Heart left ventricle (tissue), 16 donors: ENCODE measurements at regions of chr17 and their contacts with region 1.

Region 1: DNA sequence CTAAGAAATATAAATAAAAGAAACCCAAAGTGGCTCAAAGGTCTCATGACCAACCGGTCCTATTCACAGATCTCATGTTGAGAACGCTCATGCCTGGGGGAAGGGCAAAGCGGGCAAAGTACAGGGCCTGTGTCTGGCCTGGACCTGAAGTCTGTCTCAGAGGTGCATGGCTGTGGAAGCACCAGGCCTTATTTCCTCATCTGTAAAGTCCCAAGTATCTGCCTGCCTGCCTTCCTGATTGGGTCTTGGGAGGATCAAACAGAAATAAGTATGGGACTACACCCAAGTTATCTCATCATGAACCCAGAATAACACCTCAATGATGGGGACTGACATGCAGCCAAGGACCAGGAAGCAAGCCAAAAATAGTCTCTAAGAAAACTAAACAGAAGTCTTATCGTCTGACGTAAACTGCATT is 14.2 kb downstream of the AXIN2 start:
- DNase-seq: peak in 2 of 5 donors; percentile 51 to 72
- ATAC-seq: peak; percentile 77 to 88 (median 84)
- H3K4me3 ChIP-seq: no peak overlapping the region
- H3K27ac ChIP-seq: peak overlapping the region in 11 of 12 donors; percentile 34 to 90 (median 81)
- H3K4me1 ChIP-seq: peaks cover 0 to 87% (median 45%) of the 10 kb centered on the region in 12 donors
- H3K27me3 ChIP-seq: no peaks in the 10 kb centered on the region
- CTCF ChIP-seq: no peak
- POLR2A ChIP-seq: no peak

Region 2: GRCh38 chr17:65122836-65123756 is 424.2 kb before region 1 on chr17:
- intact Hi-C with region 1: no loop called
- DNase-seq: peak; percentile 85 to 89 (median 86)
- ATAC-seq: peak; percentile 74 to 98 (median 92)
- H3K4me3 ChIP-seq: peak overlapping the region; percentile 36 to 82 (median 73)
- H3K27ac ChIP-seq: peak overlapping the region; percentile 71 to 94 (median 87)
- H3K4me1 ChIP-seq: peaks cover 0 to 12% (median 3%) of the 10 kb centered on the region in 12 donors
- H3K27me3 ChIP-seq: peaks cover 0 to under 1% (median 0%) of the 10 kb centered on the region in 9 donors
- CTCF ChIP-seq: no peak
- POLR2A ChIP-seq: peak in 1 of 2 donors; percentile 25

Region 3: GRCh38 chr17:65463242-65463641 is 84.0 kb before region 1 on chr17:
- intact Hi-C with region 1: loop called in 3 of 10 experiments (anchors 2 to 5 kb)
- DNase-seq: peak; percentile 40 to 93 (median 75)
- ATAC-seq: peak; percentile 98 to 99 (median 98)
- H3K4me3 ChIP-seq: no peak overlapping the region
- H3K27ac ChIP-seq: peak overlapping the region; percentile 32 to 84 (median 68)
- H3K4me1 ChIP-seq: peaks cover 0 to 9% (median 0%) of the 10 kb centered on the region in 12 donors
- H3K27me3 ChIP-seq: peaks cover 0 to 2% (median 0%) of the 10 kb centered on the region in 9 donors
- CTCF ChIP-seq: no peak
- POLR2A ChIP-seq: no peak

Region 4: GRCh38 chr17:65723385-65724151 is 176.3 kb after region 1 on chr17:
- intact Hi-C with region 1: no loop called
- DNase-seq: no peak
- ATAC-seq: no peak
- H3K4me3 ChIP-seq: no peak overlapping the region
- H3K27ac ChIP-seq: peak overlapping the region in 1 of 12 donors; percentile 14
- H3K4me1 ChIP-seq: no peaks in the 10 kb centered on the region
- H3K27me3 ChIP-seq: no peaks in the 10 kb centered on the region
- CTCF ChIP-seq: no peak
- POLR2A ChIP-seq: no peak